HEK293T (cell line): ENCODE measurements at regions of chr6 and their contacts with region 1.

Region 1: DNA sequence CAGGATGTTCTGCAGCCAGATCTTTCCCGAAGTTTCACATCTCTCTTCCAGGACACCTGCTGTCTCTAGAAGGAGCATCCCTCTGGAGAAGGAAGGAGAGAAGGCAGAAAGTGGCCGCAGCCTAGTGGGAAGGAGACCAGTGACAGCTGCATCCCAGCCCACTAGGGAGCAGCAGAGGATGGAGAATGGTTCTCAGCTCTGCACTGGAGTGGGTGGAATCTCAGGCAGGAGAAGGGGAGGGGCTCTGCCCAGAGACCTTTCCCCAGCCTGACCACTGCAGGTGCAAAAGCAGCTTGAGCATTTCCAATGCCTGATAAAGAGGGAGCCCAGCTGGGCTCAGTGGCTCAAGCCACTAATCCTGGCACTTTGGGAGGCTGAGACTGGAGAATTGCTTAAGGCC is 32.3 kb downstream of the NCR2 start:
- DNase-seq: peak; percentile 88

Region 2: GRCh38 chr6:41602864-41603608 is 235.3 kb after region 1 on chr6:
- CTCF ChIA-PET with region 1: interaction called, 12 read pairs
- POLR2A ChIA-PET with region 1: no interaction called
- DNase-seq: peak; percentile 86

Region 3: DNA sequence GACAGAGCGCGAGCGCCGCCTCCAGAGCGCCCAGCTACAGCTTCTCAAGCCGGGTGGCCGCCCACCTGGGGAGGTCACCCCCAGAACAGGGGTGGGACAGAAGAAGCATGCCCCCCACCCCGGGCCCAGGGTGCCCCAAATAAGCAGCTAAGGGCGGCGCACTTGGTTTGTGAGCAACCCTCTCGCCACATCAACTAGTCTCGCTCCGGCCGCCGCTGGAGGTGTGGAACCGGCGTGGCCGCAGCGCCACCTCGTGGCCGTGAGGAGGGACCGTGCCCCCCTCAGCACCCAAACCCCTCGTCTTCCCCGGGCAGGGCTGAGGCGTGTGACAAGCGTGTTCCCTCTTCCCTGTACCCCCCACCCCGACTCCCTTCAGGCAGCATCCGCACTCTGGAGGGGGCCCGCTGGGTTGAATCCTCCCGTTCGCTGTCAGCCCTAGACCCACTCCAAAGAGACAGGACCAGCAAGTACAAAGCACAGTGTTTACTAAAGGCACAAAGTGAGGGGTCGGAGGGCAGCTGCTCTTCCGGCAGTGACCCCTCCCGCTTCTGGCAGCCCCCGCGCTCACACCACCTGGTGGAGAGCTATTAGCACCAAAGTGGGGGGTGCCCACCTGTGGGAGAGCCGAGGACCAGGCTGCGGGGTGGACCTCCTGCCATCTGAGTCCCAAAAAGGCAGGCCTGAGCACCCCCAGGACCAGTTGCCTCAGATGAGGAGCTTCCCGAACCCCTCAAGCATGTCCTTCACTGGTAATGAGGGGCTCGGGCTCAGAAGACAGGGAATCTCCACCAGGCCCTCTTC is 316.0 kb after region 1 on chr6:
- CTCF ChIA-PET with region 1: interaction called, 29 read pairs
- POLR2A ChIA-PET with region 1: interaction called, 3 read pairs
- DNase-seq: peak; percentile 87

Region 4: DNA sequence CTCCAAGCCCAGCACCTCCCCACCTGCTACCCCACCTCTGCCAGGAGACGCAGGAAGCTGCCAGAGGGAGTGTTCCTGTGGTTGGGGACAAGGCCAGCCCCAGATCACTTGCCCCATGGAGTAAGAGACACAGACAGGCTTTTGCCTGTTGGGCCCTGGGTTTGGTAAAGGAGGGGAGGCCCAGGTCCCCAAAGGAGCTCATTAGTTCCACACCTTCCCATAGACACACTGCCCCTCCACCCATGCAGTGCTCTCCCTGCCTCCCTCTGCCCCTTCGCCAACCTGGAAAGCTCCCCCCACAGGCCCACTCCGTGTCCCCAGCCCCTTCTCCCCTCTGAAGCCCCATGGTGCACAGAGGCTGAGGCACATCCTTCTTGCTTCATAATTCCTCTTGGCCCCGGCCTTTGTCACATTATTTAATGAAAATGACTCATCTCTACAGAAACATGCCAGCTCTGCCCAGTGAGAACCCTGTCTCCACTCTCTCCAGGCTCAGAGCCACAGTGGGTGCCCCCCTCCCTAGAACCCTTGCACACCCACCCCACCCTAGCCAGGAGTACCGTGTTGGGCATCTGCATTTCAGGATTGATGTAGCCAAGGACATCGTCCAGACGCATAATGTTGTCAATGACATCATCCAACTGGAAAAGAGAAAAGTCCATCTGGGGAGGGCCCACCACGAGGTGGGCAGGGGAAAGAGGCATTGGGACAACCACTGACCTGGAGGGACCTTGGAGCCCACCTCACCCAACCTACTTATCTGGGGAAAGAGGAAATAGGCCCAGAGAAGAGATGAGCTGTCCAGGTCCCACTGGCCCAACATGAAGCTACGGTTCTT is 321.7 kb after region 1 on chr6:
- CTCF ChIA-PET with region 1: interaction called, 29 read pairs
- POLR2A ChIA-PET with region 1: no interaction called
- DNase-seq: no peak